ENCODE measurements at regions of chr3 and their contacts with region 1.

Region 1: DNA sequence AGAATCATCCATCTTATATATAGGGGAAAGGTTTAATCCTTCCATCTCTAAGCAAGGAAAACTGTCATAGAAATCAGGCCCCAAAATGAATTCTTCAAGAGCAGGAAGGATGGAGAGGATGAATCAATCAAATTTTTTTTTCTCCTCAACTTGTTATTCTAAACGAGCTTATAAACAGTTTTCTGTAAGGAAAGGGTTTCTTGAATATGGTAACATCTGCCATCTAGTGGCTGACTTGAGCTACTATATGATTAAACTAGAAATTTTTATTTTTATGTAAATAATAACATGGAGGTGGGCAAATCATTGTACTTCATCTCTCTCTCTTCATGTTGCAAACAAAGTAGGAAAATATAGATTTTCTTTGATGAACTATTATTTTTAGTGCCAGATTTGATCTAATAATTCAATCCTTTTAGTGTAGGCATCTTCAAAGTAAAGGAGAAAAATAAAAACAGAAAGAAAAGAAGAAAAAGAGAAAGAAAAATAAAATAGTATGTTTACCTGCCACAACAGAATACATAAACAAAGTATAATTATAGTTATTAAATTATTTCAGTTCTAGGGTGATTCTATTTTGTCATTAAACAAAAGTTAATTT is 146.6 kb downstream of the SERPINI1 start:
- DNase-seq: peak; percentile 8 to 57
- ATAC-seq: peak in 1 of 2 experiments; percentile 65; a peak in 2 of 6 replicates
- H3K4me3 ChIP-seq: no peak overlapping the region
- H3K27ac ChIP-seq: 0 out of 6 replicates have a peak overlapping the region, but pooled peaks of 1 of the 2 experiments have one; percentile 33
- H3K4me1 ChIP-seq: peaks cover 14% of the 10 kb centered on the region
- CTCF ChIP-seq: peak; percentile 69
- EP300 ChIP-seq: no peak
- POLR2A ChIP-seq: no peak
- RAD21 ChIP-seq: peak; percentile 59 to 76

Region 2: DNA sequence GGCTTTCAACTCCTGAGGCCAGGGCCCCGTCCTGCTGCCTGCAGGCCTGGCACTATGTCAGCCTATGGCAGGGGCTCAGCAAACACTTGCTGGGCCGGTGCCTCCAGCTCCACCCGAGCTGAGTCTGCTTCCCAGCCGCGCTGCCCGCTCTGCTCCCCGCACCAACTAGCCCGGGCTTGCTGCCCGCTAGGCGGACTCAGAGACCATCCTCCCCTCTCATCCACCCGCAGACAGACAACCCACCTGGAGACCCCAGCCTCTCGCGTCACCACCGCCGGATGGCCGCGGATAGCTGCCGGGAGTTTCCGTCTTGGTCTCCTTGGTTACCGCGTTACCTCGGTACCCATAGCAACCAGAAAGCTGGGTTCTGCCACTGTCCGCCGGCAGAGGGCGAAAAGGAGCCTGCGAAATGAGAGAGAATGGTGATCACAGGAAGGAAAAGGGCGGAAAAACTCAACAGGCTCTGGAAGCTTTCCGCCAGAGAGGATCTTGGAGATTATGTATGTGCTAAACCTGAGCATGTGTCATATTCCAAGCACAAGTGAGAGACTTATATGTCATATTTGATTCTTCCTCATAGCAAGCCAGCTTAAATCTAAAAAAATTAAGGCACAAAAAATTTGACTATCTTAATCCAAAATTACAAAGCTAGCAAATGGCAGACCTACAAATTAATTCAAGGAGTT is 502.0 kb before region 1 on chr3 and contains the start of gene ZBBX:
- CTCF ChIA-PET with region 1: interaction called, 10 read pairs
- POLR2A ChIA-PET with region 1: no interaction called
- DNase-seq: peak; percentile 4 to 72
- ATAC-seq: peak; percentile 97 to 99
- H3K4me3 ChIP-seq: peak within 1 kb of the TSS; percentile 36
- H3K27ac ChIP-seq: 0 out of 6 replicates have a peak within 1 kb of the TSS, but pooled peaks of 1 of the 2 experiments have one; percentile 38
- H3K4me1 ChIP-seq: no peaks in the 10 kb centered on the region
- CTCF ChIP-seq: peak; percentile 69
- EP300 ChIP-seq: no peak
- POLR2A ChIP-seq: no peak
- RAD21 ChIP-seq: peak; percentile 58 to 63
- polyA plus RNA-seq, gene ZBBX: 0.04 and 0.05 TPM in 2 replicates

Region 3: DNA sequence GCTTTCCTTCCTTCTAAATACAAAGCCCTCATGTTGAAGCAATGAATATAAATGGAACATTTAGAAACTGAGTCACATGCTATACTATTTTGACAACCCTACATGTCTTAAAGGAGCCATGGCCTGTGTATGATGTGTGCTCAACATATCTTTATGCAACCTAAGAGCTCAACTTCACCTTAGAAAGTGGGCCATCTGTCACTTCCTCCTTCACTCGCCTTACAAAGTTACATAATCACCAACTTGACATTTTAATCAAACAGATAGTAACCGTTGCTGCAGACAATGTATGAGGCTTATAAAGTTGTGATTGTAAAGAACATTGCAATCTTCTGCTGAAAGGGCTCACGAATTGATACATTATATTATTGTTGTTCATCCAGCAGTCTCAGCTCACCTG is 16.9 kb after region 1 on chr3:
- CTCF ChIA-PET with region 1: no interaction called
- POLR2A ChIA-PET with region 1: no interaction called
- DNase-seq: no peak
- ATAC-seq: no peak
- H3K4me3 ChIP-seq: no peak overlapping the region
- H3K27ac ChIP-seq: no peak overlapping the region
- H3K4me1 ChIP-seq: no peaks in the 10 kb centered on the region
- CTCF ChIP-seq: no peak
- EP300 ChIP-seq: no peak
- POLR2A ChIP-seq: no peak
- RAD21 ChIP-seq: no peak

Measured in A549 (cell line).